Natural killer cell (primary cell): ENCODE measurements at regions of chr10 and their contacts with region 1.

Region 1: GRCh38 chr10:98943681-98944080 is 292.0 kb downstream of the HPSE2 start:
- DNase-seq: no peak
- ATAC-seq: no peak
- H3K4me3 ChIP-seq: no peak overlapping the region
- H3K4me3 Mint-ChIP-seq: no peak overlapping the region
- H3K27ac ChIP-seq: no peak overlapping the region
- H3K27ac Mint-ChIP-seq: no peak overlapping the region
- H3K4me1 ChIP-seq: no peaks in the 10 kb centered on the region
- H3K4me1 Mint-ChIP-seq: no peaks in the 10 kb centered on the region
- H3K27me3 ChIP-seq: no peaks in the 10 kb centered on the region
- H3K27me3 Mint-ChIP-seq: no peaks in the 10 kb centered on the region
- CTCF ChIP-seq: no peak

Region 2: GRCh38 chr10:98646998-98647917 is 296.4 kb before region 1 on chr10:
- intact Hi-C with region 1: no loop called
- DNase-seq: no peak
- ATAC-seq: no peak
- H3K4me3 ChIP-seq: no peak overlapping the region
- H3K4me3 Mint-ChIP-seq: no peak overlapping the region
- H3K27ac ChIP-seq: no peak overlapping the region
- H3K27ac Mint-ChIP-seq: no peak overlapping the region
- H3K4me1 ChIP-seq: no peaks in the 10 kb centered on the region
- H3K4me1 Mint-ChIP-seq: no peaks in the 10 kb centered on the region
- H3K27me3 ChIP-seq: peaks cover 9% of the 10 kb centered on the region
- H3K27me3 Mint-ChIP-seq: peaks cover 13 to 14% of the 10 kb centered on the region in 2 donors
- CTCF ChIP-seq: no peak

Region 3: GRCh38 chr10:98713586-98713985 is 230.1 kb before region 1 on chr10:
- intact Hi-C with region 1: no loop called
- DNase-seq: no peak
- ATAC-seq: no peak
- H3K4me3 ChIP-seq: no peak overlapping the region
- H3K4me3 Mint-ChIP-seq: no peak overlapping the region
- H3K27ac ChIP-seq: no peak overlapping the region
- H3K27ac Mint-ChIP-seq: no peak overlapping the region
- H3K4me1 ChIP-seq: no peaks in the 10 kb centered on the region
- H3K4me1 Mint-ChIP-seq: no peaks in the 10 kb centered on the region
- H3K27me3 ChIP-seq: no peaks in the 10 kb centered on the region
- H3K27me3 Mint-ChIP-seq: peaks cover 0 to 4% of the 10 kb centered on the region in 2 donors
- CTCF ChIP-seq: no peak

Region 4: DNA sequence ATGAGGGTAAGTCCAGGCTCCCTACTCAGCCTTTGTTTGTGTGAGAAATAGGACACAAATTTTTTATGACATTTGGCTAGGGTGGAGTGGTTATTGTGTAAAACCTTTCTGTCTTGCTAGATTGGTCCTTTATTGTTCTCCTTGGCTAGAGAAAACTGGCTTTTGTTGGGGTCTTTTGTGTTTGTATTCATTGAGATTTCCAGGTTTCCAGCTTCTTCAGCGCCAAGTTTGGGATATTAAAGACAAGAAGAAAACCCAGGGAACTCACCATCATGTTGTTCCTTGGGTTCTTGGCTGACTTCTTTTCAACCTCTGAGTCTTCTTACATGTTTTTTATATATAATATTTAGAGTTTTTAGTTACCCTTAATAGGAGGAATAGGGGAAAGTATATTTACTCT is 18.0 kb before region 1 on chr10:
- intact Hi-C with region 1: loop called (anchors 1 kb)
- DNase-seq: no peak
- ATAC-seq: no peak
- H3K4me3 ChIP-seq: no peak overlapping the region
- H3K4me3 Mint-ChIP-seq: no peak overlapping the region
- H3K27ac ChIP-seq: no peak overlapping the region
- H3K27ac Mint-ChIP-seq: no peak overlapping the region
- H3K4me1 ChIP-seq: no peaks in the 10 kb centered on the region
- H3K4me1 Mint-ChIP-seq: no peaks in the 10 kb centered on the region
- H3K27me3 ChIP-seq: no peaks in the 10 kb centered on the region
- H3K27me3 Mint-ChIP-seq: no peaks in the 10 kb centered on the region
- CTCF ChIP-seq: no peak